Activated CD4-positive, alpha-beta T cell treated with anti-CD3 and anti-CD28 coated beads, Interleukin-2, amount 10 ng/mL, durations not matched to agents 24 days and 14 days (primary cell): ENCODE measurements at regions of chr9 and their contacts with region 1.

Region 1: GRCh38 chr9:35814841-35815543 is at the start of gene HINT2:
- DNase-seq: peak; percentile 99
- H3K4me3 Mint-ChIP-seq: peak within 1 kb of the TSS; percentile 90
- H3K27ac Mint-ChIP-seq: peak within 1 kb of the TSS; percentile 98
- H3K4me1 Mint-ChIP-seq: peaks cover 35% of the 10 kb centered on the region
- H3K27me3 Mint-ChIP-seq: peaks cover 4% of the 10 kb centered on the region
- total RNA-seq, gene HINT2: 42.3 and 42.5 TPM in 2 replicates

Region 2: GRCh38 chr9:35116898-35117551 is 698.0 kb before region 1 on chr9:
- intact Hi-C with region 1: loop called (anchors 10 kb)
- DNase-seq: peak; percentile 96
- H3K4me3 Mint-ChIP-seq: peak overlapping the region; percentile 91
- H3K27ac Mint-ChIP-seq: peak overlapping the region; percentile 94
- H3K4me1 Mint-ChIP-seq: peaks cover 37% of the 10 kb centered on the region
- H3K27me3 Mint-ChIP-seq: peaks cover 2% of the 10 kb centered on the region

Region 3: DNA sequence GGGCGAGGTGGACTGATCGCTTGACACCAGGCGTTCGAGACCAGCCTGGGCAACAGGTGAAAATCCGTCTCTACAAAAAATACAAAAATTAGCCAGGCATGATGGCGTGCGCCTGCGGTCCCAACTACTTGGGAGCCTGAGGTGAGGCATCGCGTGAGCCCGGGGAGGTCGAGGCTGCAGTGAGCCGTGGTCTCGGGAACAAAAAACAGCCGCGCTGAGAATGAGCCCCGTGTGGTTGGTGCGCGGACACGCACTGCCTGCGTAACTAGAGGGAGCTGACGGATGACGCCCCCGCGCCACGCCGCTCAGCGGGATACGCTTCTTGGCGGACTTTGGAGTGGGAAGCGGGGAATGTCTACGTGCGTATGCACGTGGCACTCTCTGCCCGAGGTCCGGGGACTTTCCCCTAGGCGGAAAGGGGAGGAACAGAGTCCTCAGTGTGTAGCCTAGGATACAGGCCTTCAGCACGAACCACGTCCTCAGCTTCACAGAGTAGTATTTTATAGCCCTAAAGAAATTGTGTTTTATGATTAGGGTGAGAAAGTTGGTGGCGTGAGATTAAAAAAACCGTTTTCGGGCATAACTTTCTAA is 157.4 kb before region 1 on chr9 and contains the start of gene RMRP:
- intact Hi-C with region 1: loop called (anchors 5 kb)
- DNase-seq: peak; percentile 96
- H3K4me3 Mint-ChIP-seq: peak within 1 kb of the TSS; percentile 92
- H3K27ac Mint-ChIP-seq: peak within 1 kb of the TSS; percentile 99
- H3K4me1 Mint-ChIP-seq: peaks cover 58% of the 10 kb centered on the region
- H3K27me3 Mint-ChIP-seq: peaks cover 7% of the 10 kb centered on the region
- total RNA-seq, gene RMRP: 5,949 and 6,301 TPM in 2 replicates

Region 4: GRCh38 chr9:35756275-35757225 is 58.4 kb before region 1 on chr9:
- intact Hi-C with region 1: loop called (anchors 2 kb)
- DNase-seq: peak; percentile 94
- H3K4me3 Mint-ChIP-seq: peak overlapping the region; percentile 99
- H3K27ac Mint-ChIP-seq: peak overlapping the region; percentile 98
- H3K4me1 Mint-ChIP-seq: peaks cover 39% of the 10 kb centered on the region
- H3K27me3 Mint-ChIP-seq: no peaks in the 10 kb centered on the region

Region 5: DNA sequence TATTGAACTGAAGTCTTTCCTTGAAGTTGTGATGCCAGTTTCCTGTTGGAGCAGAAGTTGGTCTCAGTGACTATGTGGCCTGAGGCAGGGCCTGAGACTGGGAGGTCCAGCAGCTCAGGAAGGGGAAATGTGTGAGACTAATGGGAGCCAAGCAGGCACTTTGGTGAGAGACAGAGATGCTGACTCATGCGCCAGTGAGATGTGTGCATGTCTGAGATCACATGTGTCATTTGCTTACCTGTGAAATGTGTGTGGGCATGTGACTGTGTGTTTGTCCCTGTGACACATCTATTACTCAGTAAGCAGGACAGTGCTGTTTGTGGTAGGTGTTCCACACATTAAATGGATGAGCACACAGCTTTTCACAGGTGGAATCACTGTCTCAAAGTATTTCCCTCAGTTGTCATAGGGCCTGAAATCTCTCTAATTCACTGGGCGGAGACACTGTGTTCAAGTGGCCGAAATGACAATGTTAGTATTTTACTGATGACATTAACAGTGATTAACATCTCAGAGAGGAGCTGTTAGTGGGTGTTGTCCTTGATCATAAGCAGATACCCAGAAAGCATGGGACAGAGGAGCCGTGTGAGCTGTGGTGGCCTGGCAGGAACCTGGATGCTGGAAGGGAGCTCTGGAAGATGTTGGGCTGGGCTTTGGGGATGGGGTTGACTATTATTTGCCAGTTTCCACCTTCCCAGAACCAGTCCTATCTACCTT is 16.2 kb before region 1 on chr9:
- intact Hi-C with region 1: loop called (anchors 2 kb)
- DNase-seq: no peak
- H3K4me3 Mint-ChIP-seq: no peak overlapping the region
- H3K27ac Mint-ChIP-seq: peak overlapping the region; percentile 78
- H3K4me1 Mint-ChIP-seq: peaks cover 28% of the 10 kb centered on the region
- H3K27me3 Mint-ChIP-seq: no peaks in the 10 kb centered on the region

Region 6: GRCh38 chr9:36400332-36401163 is 585.6 kb after region 1 on chr9:
- intact Hi-C with region 1: loop called (anchors 10 kb)
- DNase-seq: peak; percentile 96
- H3K4me3 Mint-ChIP-seq: peak overlapping the region; percentile 93
- H3K27ac Mint-ChIP-seq: peak overlapping the region; percentile 98
- H3K4me1 Mint-ChIP-seq: peaks cover 32% of the 10 kb centered on the region
- H3K27me3 Mint-ChIP-seq: no peaks in the 10 kb centered on the region